ENCODE measurements at regions of chr2 and their contacts with region 1.

Region 1: DNA sequence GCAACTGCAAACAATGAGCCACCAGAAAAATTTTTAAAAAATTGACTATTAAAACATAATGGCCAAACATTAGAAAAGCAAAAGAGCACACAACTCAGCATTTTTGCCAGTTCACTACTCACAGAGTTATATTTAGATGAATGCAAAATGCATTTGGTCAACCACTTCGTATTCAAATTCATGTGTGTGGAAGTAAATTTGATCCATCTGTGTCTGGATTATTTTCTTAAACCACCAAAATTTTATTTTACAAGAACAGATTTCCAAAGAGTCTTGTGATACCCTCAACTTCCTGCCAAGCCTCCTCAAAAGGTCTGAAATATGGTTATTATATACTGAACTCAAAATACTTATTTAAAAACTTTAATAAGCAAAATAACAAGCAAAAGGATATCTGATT is 57.4 kb downstream of the PPP1R1C start:
- DNase-seq: no peak
- H3K4me3 ChIP-seq: no peak overlapping the region
- H3K4me3 Mint-ChIP-seq: no peak overlapping the region
- H3K27ac ChIP-seq: no peak overlapping the region
- H3K27ac Mint-ChIP-seq: no peak overlapping the region
- H3K4me1 ChIP-seq: no peaks in the 10 kb centered on the region
- H3K4me1 Mint-ChIP-seq: no peaks in the 10 kb centered on the region
- H3K27me3 ChIP-seq: no peaks in the 10 kb centered on the region
- H3K27me3 Mint-ChIP-seq: peaks cover 0 to 2% of the 10 kb centered on the region in 2 donors

Region 2: GRCh38 chr2:182077451-182078142 is 34.6 kb after region 1 on chr2:
- CTCF ChIA-PET with region 1: no interaction called
- POLR2A ChIA-PET with region 1: no interaction called
- intact Hi-C with region 1: loop called (anchors 2 kb)
- DNase-seq: peak in 4 of 5 donors; percentile 2 to 6 (median 4)
- H3K4me3 ChIP-seq: no peak overlapping the region
- H3K4me3 Mint-ChIP-seq: no peak overlapping the region
- H3K27ac ChIP-seq: no peak overlapping the region
- H3K27ac Mint-ChIP-seq: no peak overlapping the region
- H3K4me1 ChIP-seq: no peaks in the 10 kb centered on the region
- H3K4me1 Mint-ChIP-seq: no peaks in the 10 kb centered on the region
- H3K27me3 ChIP-seq: no peaks in the 10 kb centered on the region
- H3K27me3 Mint-ChIP-seq: peaks cover 1 to 5% of the 10 kb centered on the region in 2 donors